PC-9 (cell line): ENCODE measurements at regions of chr7 and their contacts with region 1.

Region 1: DNA sequence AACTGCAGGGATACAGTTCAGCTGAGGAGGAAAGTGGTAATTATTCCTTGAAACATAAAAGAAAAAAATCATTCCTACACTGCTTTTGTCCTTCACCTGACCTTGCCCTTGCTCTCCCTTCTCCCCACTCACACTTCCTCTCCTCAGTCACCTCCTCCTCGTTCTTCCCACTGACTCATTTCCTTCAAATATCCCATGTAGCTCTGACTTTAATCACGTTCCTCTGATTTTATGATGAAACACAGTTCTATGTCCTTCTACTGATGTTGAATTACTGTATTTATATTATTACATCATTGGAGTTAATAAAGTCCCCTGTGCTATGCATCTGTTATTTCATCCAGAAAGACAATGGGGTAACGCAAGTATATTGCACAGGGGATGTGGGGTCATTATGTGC is 575.6 kb downstream of the POM121L12 start:
- DNase-seq: no peak
- H3K4me3 ChIP-seq: no peak overlapping the region
- H3K27ac ChIP-seq: no peak overlapping the region
- H3K4me1 ChIP-seq: no peaks in the 10 kb centered on the region
- H3K27me3 ChIP-seq: no peaks in the 10 kb centered on the region
- CTCF ChIP-seq: no peak

Region 2: GRCh38 chr7:53672681-53673080 is 61.6 kb after region 1 on chr7:
- CTCF ChIA-PET with region 1: no interaction called
- POLR2A ChIA-PET with region 1: no interaction called
- intact Hi-C with region 1: loop called (anchors 10 kb)
- DNase-seq: no peak
- H3K4me3 ChIP-seq: no peak overlapping the region
- H3K27ac ChIP-seq: no peak overlapping the region
- H3K4me1 ChIP-seq: no peaks in the 10 kb centered on the region
- H3K27me3 ChIP-seq: no peaks in the 10 kb centered on the region
- CTCF ChIP-seq: no peak

Region 3: DNA sequence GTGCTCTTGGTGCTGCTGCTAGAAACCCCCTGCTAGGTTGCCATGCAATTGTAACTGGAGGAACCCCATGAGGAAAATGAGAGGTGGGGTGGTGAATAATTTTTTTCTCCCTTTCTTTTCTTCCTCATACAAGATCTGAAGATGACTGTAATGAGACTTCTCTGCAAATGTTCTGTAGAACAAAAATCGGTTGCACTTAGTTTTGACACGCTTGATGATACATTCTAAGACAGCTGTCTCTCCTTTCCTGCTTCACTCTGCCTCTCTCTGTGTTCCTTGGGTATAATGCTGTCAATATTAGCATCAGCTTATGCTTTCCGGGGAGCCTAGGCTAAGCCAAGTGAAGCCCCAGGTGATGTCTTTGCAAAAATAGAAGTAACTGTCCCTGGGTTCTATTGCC is 145.9 kb after region 1 on chr7:
- CTCF ChIA-PET with region 1: no interaction called
- POLR2A ChIA-PET with region 1: no interaction called
- intact Hi-C with region 1: no loop called
- DNase-seq: no peak
- H3K4me3 ChIP-seq: no peak overlapping the region
- H3K27ac ChIP-seq: no peak overlapping the region
- H3K4me1 ChIP-seq: no peaks in the 10 kb centered on the region
- H3K27me3 ChIP-seq: no peaks in the 10 kb centered on the region
- CTCF ChIP-seq: no peak